ENCODE measurements at regions of chr18 and their contacts with region 1.

Region 1: GRCh38 chr18:74081966-74082741 is 65.5 kb downstream of the FBXO15 start:
- DNase-seq: peak in 8 of 10 donors; percentile 54 to 78 (median 66)
- H3K4me3 ChIP-seq: peak overlapping the region in 15 of 59 donors; percentile 7 to 45 (median 29)
- H3K27ac ChIP-seq: peak overlapping the region in 27 of 59 donors; percentile 1 to 74 (median 47)
- H3K27me3 ChIP-seq: no peaks in the 10 kb centered on the region
- CTCF ChIP-seq: peak in 54 of 56 donors; percentile 14 to 82 (median 58)

Region 2: GRCh38 chr18:73945130-73945792 is 136.9 kb before region 1 on chr18:
- intact Hi-C with region 1: no loop called
- DNase-seq: no peak
- H3K4me3 ChIP-seq: no peak overlapping the region
- H3K27ac ChIP-seq: peak overlapping the region in 8 of 59 donors; percentile 8 to 74 (median 34)
- H3K27me3 ChIP-seq: no peaks in the 10 kb centered on the region
- CTCF ChIP-seq: no peak

Region 3: GRCh38 chr18:74116633-74117554 is 34.7 kb after region 1 on chr18:
- intact Hi-C with region 1: loop called in 1 of 2 experiments (anchors 5 kb)
- DNase-seq: peak in 1 of 10 donors; percentile 51
- H3K4me3 ChIP-seq: peak overlapping the region in 1 of 59 donors; percentile 24
- H3K27ac ChIP-seq: peak overlapping the region in 16 of 59 donors; percentile 4 to 61 (median 28)
- H3K27me3 ChIP-seq: no peaks in the 10 kb centered on the region
- CTCF ChIP-seq: peak; percentile 48 to 79 (median 68)

Region 4: GRCh38 chr18:74389171-74389927 is 307.2 kb after region 1 on chr18:
- intact Hi-C with region 1: no loop called
- DNase-seq: no peak
- H3K4me3 ChIP-seq: no peak overlapping the region
- H3K27ac ChIP-seq: no peak overlapping the region
- H3K27me3 ChIP-seq: peaks cover 0 to 7% (median 0%) of the 10 kb centered on the region in 45 donors
- CTCF ChIP-seq: no peak